K562 (cell line): ENCODE measurements at regions of chr12 and their contacts with region 1.

Region 1: GRCh38 chr12:49264738-49265515 is at the start of gene TUBA1C:
- DNase-seq: peak; percentile 95 to 99 (median 98)
- ATAC-seq: peak; percentile 85
- H3K4me3 ChIP-seq: peak within 1 kb of the TSS; percentile 90
- H3K27ac ChIP-seq: peak within 1 kb of the TSS; percentile 83
- H3K4me1 ChIP-seq: peaks cover 17 to 23% of the 10 kb centered on the region in 2 experiments
- H3K27me3 ChIP-seq: no peaks in the 10 kb centered on the region
- CTCF ChIP-seq: peak in 1 of 3 experiments; percentile 13; a peak in 1 of 6 replicates
- EP300 ChIP-seq: peak; percentile 15; the same call in 1 of the 2 replicates
- POLR2A ChIP-seq: peak; percentile 100
- RAD21 ChIP-seq: no peak
- polyA plus RNA-seq, gene TUBA1C: 776 to 1,185 TPM

Region 2: GRCh38 chr12:48092611-48093010 is 1172.3 kb before region 1 on chr12:
- CTCF ChIA-PET with region 1: no interaction called
- POLR2A ChIA-PET with region 1: no interaction called
- in situ Hi-C with region 1: no loop called
- intact Hi-C with region 1: no loop called
- DNase-seq: no peak
- ATAC-seq: no peak
- H3K4me3 ChIP-seq: no peak overlapping the region
- H3K27ac ChIP-seq: no peak overlapping the region
- H3K4me1 ChIP-seq: no peaks in the 10 kb centered on the region
- H3K27me3 ChIP-seq: no peaks in the 10 kb centered on the region
- CTCF ChIP-seq: no peak
- EP300 ChIP-seq: no peak
- POLR2A ChIP-seq: no peak
- RAD21 ChIP-seq: no peak

Region 3: DNA sequence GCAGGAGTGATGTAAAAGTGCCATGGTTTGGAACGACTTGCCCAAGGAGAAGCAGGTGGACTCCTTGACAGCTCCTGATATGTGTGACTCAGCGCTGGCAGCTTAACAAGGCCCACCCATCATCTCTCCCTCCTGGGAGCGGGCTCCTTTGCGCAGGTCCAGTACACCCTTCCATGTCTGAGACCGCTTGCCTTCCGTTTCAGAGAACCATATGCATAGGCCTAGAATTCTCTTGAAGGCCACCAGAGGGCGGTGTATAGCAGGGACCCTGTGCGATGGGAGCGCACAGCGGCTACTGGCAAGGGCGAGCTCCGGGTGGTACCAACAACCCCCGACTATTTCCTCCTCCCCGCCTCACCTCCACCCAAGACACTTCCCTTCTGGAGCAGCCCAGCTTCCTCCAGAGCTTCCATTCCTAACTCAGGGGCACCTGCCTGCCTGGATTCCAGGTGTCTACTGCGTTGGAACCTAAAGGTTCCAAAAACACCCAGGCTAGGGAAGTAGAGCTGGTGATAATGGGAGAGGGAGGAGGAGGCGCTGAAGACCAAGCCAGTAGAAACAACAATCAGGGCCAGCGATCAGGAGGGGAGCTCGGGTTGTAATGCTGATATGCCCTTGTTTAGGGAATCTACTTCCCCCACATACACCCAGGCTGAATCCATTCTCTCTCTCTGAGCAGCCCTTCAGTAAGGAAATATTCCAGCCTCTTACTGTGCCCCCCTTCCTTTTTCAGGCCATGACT is 176.6 kb before region 1 on chr12:
- CTCF ChIA-PET with region 1: no interaction called
- POLR2A ChIA-PET with region 1: interaction called, 25 read pairs
- in situ Hi-C with region 1: no loop called
- intact Hi-C with region 1: no loop called
- DNase-seq: peak; percentile 82 to 97 (median 87)
- ATAC-seq: peak; percentile 83
- H3K4me3 ChIP-seq: peak overlapping the region; percentile 22; the same call in 1 of the 2 replicates
- H3K27ac ChIP-seq: peak overlapping the region; percentile 40; the same call in 2 of the 3 replicates
- H3K4me1 ChIP-seq: peaks cover 49 to 57% of the 10 kb centered on the region in 2 experiments
- H3K27me3 ChIP-seq: no peaks in the 10 kb centered on the region
- CTCF ChIP-seq: peak; percentile 93 to 98 (median 96)
- EP300 ChIP-seq: peak; percentile 39; the same call in 1 of the 2 replicates
- POLR2A ChIP-seq: no peak; the same call in 1 of the 2 replicates
- RAD21 ChIP-seq: peak; percentile 85 to 88

Region 4: GRCh38 chr12:49208676-49209075 is 56.3 kb before region 1 on chr12:
- CTCF ChIA-PET with region 1: no interaction called
- POLR2A ChIA-PET with region 1: interaction called, 11 read pairs
- in situ Hi-C with region 1: no loop called
- intact Hi-C with region 1: no loop called
- DNase-seq: no peak
- ATAC-seq: no peak
- H3K4me3 ChIP-seq: no peak overlapping the region
- H3K27ac ChIP-seq: no peak overlapping the region
- H3K4me1 ChIP-seq: no peaks in the 10 kb centered on the region
- H3K27me3 ChIP-seq: no peaks in the 10 kb centered on the region
- CTCF ChIP-seq: no peak
- EP300 ChIP-seq: no peak
- POLR2A ChIP-seq: no peak
- RAD21 ChIP-seq: no peak

Region 5: DNA sequence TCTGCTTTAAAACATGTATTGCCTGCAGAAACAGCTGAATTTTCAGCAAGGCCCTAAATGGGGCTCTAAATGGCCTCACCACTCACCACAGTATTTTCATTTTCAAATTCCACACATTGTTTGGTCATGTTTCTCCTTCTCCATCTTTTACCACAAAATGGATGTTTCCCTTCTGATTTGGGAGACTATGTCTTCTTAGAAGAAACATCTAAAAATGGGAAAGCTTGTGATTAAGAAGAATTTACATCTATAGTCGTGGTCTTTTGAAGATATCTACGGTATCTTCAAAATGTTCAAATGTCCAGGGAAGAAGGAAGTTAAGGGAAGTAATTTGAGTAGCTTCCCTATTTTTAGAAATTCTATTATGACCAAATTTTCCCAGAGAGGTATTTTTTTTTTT is 20.8 kb before region 1 on chr12:
- CTCF ChIA-PET with region 1: no interaction called
- POLR2A ChIA-PET with region 1: interaction called, 28 read pairs
- in situ Hi-C with region 1: no loop called
- intact Hi-C with region 1: no loop called
- DNase-seq: no peak
- ATAC-seq: no peak
- H3K4me3 ChIP-seq: no peak overlapping the region
- H3K27ac ChIP-seq: no peak overlapping the region; the same call in 2 of the 3 replicates
- H3K4me1 ChIP-seq: peaks cover 14 to 21% of the 10 kb centered on the region in 2 experiments
- H3K27me3 ChIP-seq: no peaks in the 10 kb centered on the region
- CTCF ChIP-seq: no peak
- EP300 ChIP-seq: no peak
- POLR2A ChIP-seq: no peak
- RAD21 ChIP-seq: no peak

Region 6: DNA sequence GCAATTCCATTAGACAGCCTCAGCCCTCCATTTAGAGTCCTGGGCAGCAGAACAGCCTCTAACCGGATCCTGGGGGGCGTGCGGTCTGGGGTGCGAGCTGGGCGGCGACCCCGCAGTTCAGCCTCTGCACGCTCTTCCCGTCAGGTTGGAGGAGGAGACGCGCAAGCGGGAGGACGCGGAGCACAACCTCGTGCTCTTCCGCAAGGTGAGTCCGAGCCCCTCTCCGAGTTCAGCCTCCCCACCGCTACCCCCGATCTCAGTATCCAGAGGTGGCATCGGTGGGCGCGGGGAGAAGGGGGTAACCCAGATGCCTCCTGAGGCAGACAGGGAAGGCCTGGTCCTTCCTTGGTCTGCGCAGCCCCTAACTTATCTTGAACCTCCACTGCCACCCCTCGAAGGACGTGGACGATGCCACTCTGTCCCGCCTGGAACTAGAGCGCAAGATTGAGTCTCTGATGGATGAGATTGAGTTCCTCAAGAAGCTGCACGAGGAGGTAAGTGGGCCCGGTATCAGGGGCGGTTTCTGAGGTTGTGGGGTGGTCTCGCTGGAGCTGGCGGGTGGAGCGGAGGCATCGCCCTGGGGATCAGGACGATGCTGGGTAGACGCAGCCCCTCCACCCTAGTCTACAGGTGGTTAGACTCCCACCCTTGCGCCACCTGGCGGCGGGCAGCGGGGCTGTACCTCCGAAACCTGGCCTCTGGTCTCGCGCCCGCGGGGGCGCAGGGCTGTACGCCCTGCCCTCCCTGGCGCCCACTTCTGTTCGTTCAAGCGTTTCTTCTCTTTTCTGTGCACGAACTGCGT is 31.3 kb after region 1 on chr12:
- CTCF ChIA-PET with region 1: no interaction called
- POLR2A ChIA-PET with region 1: interaction called, 20 read pairs
- in situ Hi-C with region 1: no loop called
- intact Hi-C with region 1: no loop called
- DNase-seq: peak; percentile 79 to 94 (median 90)
- ATAC-seq: peak; percentile 89
- H3K4me3 ChIP-seq: peak overlapping the region; percentile 43
- H3K27ac ChIP-seq: no peak overlapping the region
- H3K4me1 ChIP-seq: peaks cover 11 to 56% of the 10 kb centered on the region in 2 experiments; a peak in 4 of 5 replicates
- H3K27me3 ChIP-seq: no peaks in the 10 kb centered on the region
- CTCF ChIP-seq: peak; percentile 81 to 92 (median 87)
- EP300 ChIP-seq: no peak
- POLR2A ChIP-seq: no peak
- RAD21 ChIP-seq: peak in 1 of 2 experiments; percentile 49; a peak in 2 of 4 replicates

Region 7: GRCh38 chr12:49347384-49348237 is 82.7 kb after region 1 on chr12:
- CTCF ChIA-PET with region 1: no interaction called
- POLR2A ChIA-PET with region 1: interaction called, 27 read pairs
- in situ Hi-C with region 1: no loop called
- intact Hi-C with region 1: no loop called
- DNase-seq: peak; percentile 77 to 93 (median 91)
- ATAC-seq: peak; percentile 89
- H3K4me3 ChIP-seq: peak overlapping the region; percentile 36
- H3K27ac ChIP-seq: no peak overlapping the region; the same call in 2 of the 3 replicates
- H3K4me1 ChIP-seq: peaks cover 22 to 42% of the 10 kb centered on the region in 2 experiments
- H3K27me3 ChIP-seq: peaks cover 27 to 42% of the 10 kb centered on the region in 2 experiments; a peak in 4 of 5 replicates
- CTCF ChIP-seq: peak; percentile 75 to 93 (median 92)
- EP300 ChIP-seq: no peak
- POLR2A ChIP-seq: no peak
- RAD21 ChIP-seq: peak; percentile 46 to 60; a peak in 3 of 4 replicates

Region 8: GRCh38 chr12:49403971-49404450 is 139.1 kb after region 1 on chr12:
- CTCF ChIA-PET with region 1: no interaction called
- POLR2A ChIA-PET with region 1: no interaction called
- in situ Hi-C with region 1: no loop called
- intact Hi-C with region 1: no loop called
- DNase-seq: peak; percentile 19 to 60 (median 38)
- ATAC-seq: peak; percentile 72
- H3K4me3 ChIP-seq: no peak overlapping the region
- H3K27ac ChIP-seq: no peak overlapping the region
- H3K4me1 ChIP-seq: peaks cover 16 to 21% of the 10 kb centered on the region in 2 experiments; a peak in 4 of 5 replicates
- H3K27me3 ChIP-seq: no peaks in the 10 kb centered on the region
- CTCF ChIP-seq: no peak
- EP300 ChIP-seq: no peak
- POLR2A ChIP-seq: no peak
- RAD21 ChIP-seq: no peak

Region 9: DNA sequence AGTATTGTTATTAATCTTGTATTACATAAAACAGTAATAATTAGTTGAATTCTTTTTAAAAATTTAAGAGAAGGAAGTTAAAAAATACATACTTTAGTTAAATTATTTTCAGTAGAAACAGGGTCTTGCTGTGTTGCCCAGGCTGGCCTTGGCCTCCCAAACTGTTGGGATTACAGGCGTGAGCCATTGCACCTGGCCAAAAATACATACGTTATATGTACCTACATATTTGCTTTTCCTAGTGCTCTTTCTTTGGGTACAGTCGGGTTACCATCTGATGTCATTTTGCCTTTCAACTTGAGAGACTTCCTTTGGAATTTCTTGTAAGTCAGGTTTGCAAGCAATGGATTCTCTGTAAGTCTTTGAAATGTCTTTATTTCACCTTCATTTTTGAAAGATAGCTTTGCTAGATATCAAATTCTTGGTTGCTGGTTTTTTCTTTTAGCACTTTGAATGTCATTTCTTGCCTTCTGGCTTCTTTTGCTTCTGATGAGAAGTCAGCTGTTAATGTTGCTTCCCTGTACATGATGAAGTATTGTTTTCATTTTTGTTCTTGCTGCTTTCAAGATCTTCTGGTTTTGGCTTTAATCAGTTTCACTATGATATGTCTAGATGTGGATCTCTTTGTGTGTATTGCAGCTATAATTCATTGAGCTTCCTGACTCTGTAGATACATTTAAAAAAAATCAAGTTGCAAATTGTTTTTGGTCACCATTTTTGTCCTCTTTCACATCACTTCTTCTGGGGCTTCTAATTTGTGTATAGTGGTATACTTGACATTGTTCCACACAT is 186.7 kb after region 1 on chr12:
- CTCF ChIA-PET with region 1: no interaction called
- POLR2A ChIA-PET with region 1: no interaction called
- in situ Hi-C with region 1: no loop called
- intact Hi-C with region 1: no loop called
- DNase-seq: no peak
- ATAC-seq: no peak
- H3K4me3 ChIP-seq: no peak overlapping the region
- H3K27ac ChIP-seq: no peak overlapping the region
- H3K4me1 ChIP-seq: peaks cover 0 to 3% of the 10 kb centered on the region in 2 experiments; a peak in 1 of 5 replicates
- H3K27me3 ChIP-seq: no peaks in the 10 kb centered on the region
- CTCF ChIP-seq: no peak
- EP300 ChIP-seq: no peak
- POLR2A ChIP-seq: no peak
- RAD21 ChIP-seq: no peak